Lower leg skin (tissue), 4 donors: ENCODE measurements at regions of chr14 and their contacts with region 1.

Region 1: DNA sequence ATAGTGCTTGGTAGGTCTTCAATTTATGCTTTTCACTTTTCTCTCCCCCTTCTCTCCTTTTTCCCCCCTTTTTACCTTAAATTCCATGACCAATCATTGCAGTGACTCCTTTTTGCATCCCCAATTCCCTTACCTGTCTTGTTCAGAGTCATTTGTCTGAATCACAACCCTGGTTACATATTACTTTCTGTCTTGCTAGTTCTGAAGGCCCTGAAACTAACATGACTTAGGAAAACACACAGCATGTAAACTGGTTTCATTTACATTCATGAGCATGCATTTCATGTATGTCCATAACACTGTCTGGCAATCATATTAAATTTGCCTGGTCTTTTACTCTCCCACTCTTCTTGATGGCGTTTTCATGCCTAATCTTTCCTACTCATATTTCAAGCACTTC is 20.3 kb upstream of the FOXG1 start:
- DNase-seq: no peak
- H3K4me3 ChIP-seq: no peak overlapping the region
- CTCF ChIP-seq: no peak
- POLR2A ChIP-seq: no peak

Region 2: GRCh38 chr14:28671425-28671824 is 74.8 kb before region 1 on chr14:
- intact Hi-C with region 1: no loop called
- DNase-seq: no peak
- H3K4me3 ChIP-seq: no peak overlapping the region
- CTCF ChIP-seq: no peak
- POLR2A ChIP-seq: no peak

Region 3: GRCh38 chr14:30518867-30519560 is 1772.8 kb after region 1 on chr14:
- intact Hi-C with region 1: loop called (anchors 5 kb)
- DNase-seq: no peak
- H3K4me3 ChIP-seq: no peak overlapping the region
- CTCF ChIP-seq: no peak
- POLR2A ChIP-seq: no peak